ENCODE measurements at regions of chr10 and their contacts with region 1.

Region 1: GRCh38 chr10:75187961-75188426 is 22.6 kb upstream of the VDAC2 start:
- DNase-seq: no peak
- H3K4me3 ChIP-seq: no peak overlapping the region
- H3K27ac ChIP-seq: peak overlapping the region; percentile 62 to 88 (median 83)
- H3K4me1 ChIP-seq: peaks cover 21 to 85% (median 37%) of the 10 kb centered on the region in 3 donors
- H3K27me3 ChIP-seq: no peaks in the 10 kb centered on the region
- CTCF ChIP-seq: peak; percentile 60 to 91 (median 84)
- POLR2A ChIP-seq: peak in 1 of 4 donors; percentile 9

Region 2: GRCh38 chr10:75137533-75138438 is 50.2 kb before region 1 on chr10:
- intact Hi-C with region 1: loop called (anchors 10 kb)
- DNase-seq: no peak
- H3K4me3 ChIP-seq: no peak overlapping the region
- H3K27ac ChIP-seq: peak overlapping the region; percentile 13 to 77 (median 56)
- H3K4me1 ChIP-seq: peaks cover 0 to 83% (median 32%) of the 10 kb centered on the region in 3 donors
- H3K27me3 ChIP-seq: no peaks in the 10 kb centered on the region
- CTCF ChIP-seq: no peak
- POLR2A ChIP-seq: no peak

Region 3: DNA sequence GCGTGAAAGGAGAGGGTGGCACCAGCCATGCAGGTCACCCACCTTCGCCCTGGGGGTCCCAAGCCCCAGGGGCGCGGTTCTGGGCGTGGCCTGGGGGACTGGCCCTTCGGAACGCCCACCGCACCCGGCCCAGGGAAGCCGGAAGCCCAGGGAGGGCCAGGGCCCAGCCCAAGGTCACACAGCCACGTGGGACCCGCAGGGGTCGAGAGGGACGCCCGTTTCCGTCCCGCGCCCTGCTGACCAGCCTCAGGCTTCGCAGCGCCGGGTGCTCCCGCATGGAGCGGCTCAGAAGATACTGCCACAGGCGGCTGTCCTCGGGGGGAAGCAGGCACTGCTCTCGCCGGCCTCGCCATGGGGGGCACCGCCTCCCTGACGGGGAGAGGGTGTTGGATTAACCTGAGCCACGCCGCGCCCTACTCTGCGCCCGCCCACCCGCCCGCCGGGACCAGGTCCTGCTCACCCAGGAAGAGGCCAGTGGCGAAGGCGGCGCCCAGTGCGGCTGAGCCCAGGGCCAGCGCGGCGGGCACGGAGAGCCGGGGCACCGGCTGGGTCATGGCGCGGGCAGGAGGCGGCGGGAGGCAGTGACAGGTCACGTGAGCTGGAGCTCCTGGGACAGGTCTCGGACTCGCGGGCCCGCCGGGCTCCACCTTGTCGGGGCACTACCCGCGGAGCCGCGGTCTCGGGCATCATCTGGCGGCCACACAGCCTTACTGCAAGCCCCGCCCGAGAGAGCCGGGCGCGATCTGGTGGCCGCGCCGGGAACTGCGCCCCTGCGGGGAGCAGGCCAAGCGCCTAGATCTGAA is 47.6 kb after region 1 on chr10 and contains the start of gene COMTD1:
- intact Hi-C with region 1: loop called (anchors 5 kb)
- DNase-seq: peak; percentile 66
- H3K4me3 ChIP-seq: peak within 1 kb of the TSS; percentile 61 to 82 (median 66)
- H3K27ac ChIP-seq: peak within 1 kb of the TSS; percentile 97 to 99 (median 98)
- H3K4me1 ChIP-seq: peaks cover 11 to 65% (median 21%) of the 10 kb centered on the region in 3 donors
- H3K27me3 ChIP-seq: no peaks in the 10 kb centered on the region
- CTCF ChIP-seq: peak; percentile 100
- POLR2A ChIP-seq: peak in 1 of 4 donors; percentile 47
- total RNA-seq, gene COMTD1: 87.8 to 139 (median 111) TPM

Measured in esophagus squamous epithelium (tissue), 5 donors.